ENCODE measurements at regions of chr22 and their contacts with region 1.

Region 1: GRCh38 chr22:46035742-46036557 is 59.0 kb upstream of the WNT7B start:
- DNase-seq: peak; percentile 98 to 100
- H3K4me3 ChIP-seq: peak overlapping the region; percentile 74 to 88
- H3K27ac ChIP-seq: peak overlapping the region; percentile 94 to 98
- H3K4me1 ChIP-seq: peaks cover 6 to 11% of the 10 kb centered on the region in 2 donors
- H3K27me3 ChIP-seq: no peaks in the 10 kb centered on the region
- CTCF ChIP-seq: no peak

Region 2: GRCh38 chr22:46006379-46007002 is 29.5 kb before region 1 on chr22:
- intact Hi-C with region 1: loop called (anchors 1 kb)
- DNase-seq: peak; percentile 75 to 95
- H3K4me3 ChIP-seq: peak overlapping the region; percentile 31 to 37
- H3K27ac ChIP-seq: peak overlapping the region; percentile 97 to 99
- H3K4me1 ChIP-seq: peaks cover 21 to 28% of the 10 kb centered on the region in 2 donors
- H3K27me3 ChIP-seq: no peaks in the 10 kb centered on the region
- CTCF ChIP-seq: peak; percentile 90 to 98 (median 95)

Region 3: DNA sequence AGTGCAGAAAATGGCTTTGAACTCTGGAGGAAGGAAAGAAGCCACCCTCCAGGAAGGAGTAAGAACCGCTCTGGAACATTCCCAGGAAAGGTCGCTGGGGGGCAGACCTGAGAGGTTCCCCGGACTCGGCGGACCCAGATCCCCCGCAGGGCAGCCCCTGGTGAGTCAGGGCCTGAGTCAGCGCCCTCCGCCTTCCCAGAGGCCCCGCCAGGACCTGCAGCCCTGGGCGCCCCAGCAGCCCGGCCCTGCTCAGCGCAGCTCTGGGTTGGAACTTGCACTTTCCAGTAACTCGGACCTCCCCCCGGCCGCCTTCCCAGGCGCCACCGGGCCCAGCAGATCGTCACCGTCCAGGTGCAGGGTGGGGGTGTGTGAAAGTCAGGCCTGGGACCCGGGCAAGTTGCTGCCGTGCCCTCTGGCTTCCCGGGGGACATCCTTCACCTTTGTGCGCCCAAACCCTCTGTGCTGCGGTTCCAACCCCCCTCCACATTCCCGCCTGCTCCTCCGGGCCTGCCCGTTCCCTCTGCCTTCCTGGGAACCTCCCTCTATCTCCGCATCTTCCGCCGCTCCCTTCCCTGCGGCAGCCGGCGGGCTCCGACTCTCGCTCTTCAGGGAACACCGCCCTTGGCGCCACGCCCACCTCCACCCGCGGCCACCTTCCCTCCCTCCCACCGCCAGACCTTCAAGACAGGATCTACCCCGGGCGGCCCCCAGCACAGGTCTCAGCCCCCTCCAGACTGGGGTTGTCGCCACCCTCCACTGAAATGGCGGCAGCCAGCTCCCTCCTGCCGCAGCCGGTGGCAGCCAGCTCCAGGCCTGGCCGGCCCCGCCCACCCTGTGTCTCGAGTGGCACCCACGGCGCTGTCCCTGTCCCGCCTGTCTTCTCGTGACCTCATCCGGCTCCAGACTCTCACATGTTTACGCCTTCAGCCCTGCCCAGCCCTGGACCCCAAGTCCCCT is 22.2 kb before region 1 on chr22:
- intact Hi-C with region 1: loop called (anchors 1 kb)
- DNase-seq: peak; percentile 82 to 97
- H3K4me3 ChIP-seq: peak overlapping the region; percentile 61 to 75
- H3K27ac ChIP-seq: peak overlapping the region; percentile 90 to 99
- H3K4me1 ChIP-seq: peaks cover 0 to 8% of the 10 kb centered on the region in 2 donors
- H3K27me3 ChIP-seq: no peaks in the 10 kb centered on the region
- CTCF ChIP-seq: peak; percentile 62 to 77 (median 65)

Region 4: DNA sequence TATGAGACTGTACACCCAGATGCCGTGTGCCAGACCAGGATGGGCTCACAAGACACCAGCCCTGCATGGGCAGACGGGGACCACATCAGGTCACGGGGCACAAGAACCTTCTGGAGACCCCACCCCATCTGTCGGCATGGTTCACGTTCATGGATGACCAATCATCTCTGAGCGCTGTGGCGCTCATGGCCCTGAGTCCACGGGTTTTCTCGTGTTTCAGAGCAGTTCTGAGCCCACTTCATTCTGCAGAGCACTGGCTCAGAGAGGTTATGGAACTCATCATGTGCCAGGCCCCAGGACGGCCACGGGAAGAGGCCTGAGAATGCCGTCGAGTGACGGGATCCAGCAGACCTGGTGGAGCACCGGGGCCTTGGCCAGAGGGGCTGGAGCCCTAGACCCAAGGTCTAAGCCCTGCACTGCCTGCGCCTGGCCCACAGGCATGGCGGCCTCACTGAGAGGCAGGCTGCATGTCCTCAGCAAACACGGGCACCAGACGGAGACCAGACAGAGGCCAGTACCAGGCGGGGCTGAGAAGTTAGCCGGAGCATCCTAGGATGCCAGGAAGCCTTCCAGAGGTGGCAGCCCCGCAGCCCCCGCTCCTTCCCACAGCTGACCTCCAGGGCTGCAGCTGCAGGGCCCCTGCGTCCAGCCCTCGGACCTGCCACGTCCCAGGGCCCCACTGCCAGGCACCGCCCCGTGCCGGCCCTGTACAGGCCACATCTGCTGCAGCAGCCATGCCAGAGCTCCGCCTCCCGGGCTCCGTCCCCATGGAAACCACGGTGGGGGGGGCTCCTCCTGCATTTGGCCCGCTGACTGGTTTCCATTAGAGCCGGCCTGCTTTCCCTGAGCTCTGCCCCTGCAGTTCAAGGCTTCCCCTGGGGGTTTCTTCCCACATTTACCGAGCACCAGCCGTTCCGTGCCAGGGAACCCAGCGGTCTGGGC is 51.7 kb after region 1 on chr22:
- intact Hi-C with region 1: no loop called
- DNase-seq: peak; percentile 81 to 96
- H3K4me3 ChIP-seq: peak overlapping the region; percentile 32 to 40
- H3K27ac ChIP-seq: peak overlapping the region; percentile 96 to 100
- H3K4me1 ChIP-seq: peaks cover 46 to 95% of the 10 kb centered on the region in 2 donors
- H3K27me3 ChIP-seq: no peaks in the 10 kb centered on the region
- CTCF ChIP-seq: no peak

Measured in ascending aorta (tissue), 2 donors.